ENCODE measurements at regions of chr9 and their contacts with region 1.

Region 1: DNA sequence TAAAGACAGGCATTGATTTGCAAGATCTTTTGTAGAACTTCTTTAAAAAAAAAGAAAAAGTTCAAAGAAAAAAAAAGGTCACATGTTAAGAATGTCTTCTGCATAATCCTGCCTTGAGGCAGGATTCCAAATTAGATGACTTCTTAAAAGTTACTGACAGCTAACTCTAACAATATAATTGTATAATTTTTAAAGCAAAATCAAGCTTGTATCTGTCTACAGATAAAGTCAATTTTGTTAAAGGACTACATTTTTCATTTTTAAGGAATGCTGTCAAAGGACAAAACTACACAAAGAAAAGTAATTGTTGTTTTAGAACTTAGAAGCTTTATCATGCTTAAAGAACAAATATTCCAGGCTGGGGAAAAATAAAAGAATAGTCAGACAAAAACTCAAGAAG is 57.8 kb downstream of the MPDZ start:
- DNase-seq: no peak
- H3K4me3 ChIP-seq: no peak overlapping the region
- H3K4me3 Mint-ChIP-seq: no peak overlapping the region
- H3K27ac ChIP-seq: no peak overlapping the region
- H3K27ac Mint-ChIP-seq: no peak overlapping the region
- H3K4me1 ChIP-seq: no peaks in the 10 kb centered on the region
- H3K4me1 Mint-ChIP-seq: no peaks in the 10 kb centered on the region
- H3K27me3 ChIP-seq: no peaks in the 10 kb centered on the region
- H3K27me3 Mint-ChIP-seq: no peaks in the 10 kb centered on the region

Region 2: DNA sequence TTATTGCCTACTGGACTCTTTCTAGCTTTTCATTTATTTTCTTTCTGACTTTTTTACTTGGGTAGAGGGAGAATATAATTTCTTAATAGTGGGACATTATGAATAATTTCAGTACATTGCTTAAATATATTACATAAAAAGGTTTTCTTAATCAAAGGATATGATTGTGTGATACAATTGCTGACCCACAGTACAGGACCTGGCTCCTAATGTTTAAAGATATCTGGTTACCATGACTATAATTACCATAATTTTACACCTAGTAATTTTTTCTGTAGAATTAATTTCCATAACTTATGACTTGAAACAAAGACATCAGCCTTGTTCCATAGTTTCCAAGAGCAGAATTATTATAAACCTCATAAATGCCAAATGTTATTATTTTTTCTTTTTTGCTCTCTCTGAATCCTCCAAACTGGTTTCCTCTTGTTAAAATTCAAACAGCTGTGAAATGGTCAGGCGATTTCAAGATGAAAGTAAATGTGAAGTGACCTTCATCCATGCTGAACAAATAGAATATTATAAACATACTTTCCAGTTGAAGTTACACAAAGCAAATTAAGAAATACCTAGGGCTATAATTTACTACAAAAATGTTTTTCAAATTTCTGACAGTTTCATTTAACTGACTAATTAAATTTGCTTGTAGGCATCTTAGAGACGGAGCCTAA is 829.8 kb before region 1 on chr9:
- CTCF ChIA-PET with region 1: no interaction called
- POLR2A ChIA-PET with region 1: no interaction called
- intact Hi-C with region 1: loop called (anchors 5 kb)
- DNase-seq: no peak
- H3K4me3 ChIP-seq: no peak overlapping the region
- H3K4me3 Mint-ChIP-seq: no peak overlapping the region
- H3K27ac ChIP-seq: no peak overlapping the region
- H3K27ac Mint-ChIP-seq: no peak overlapping the region
- H3K4me1 ChIP-seq: no peaks in the 10 kb centered on the region
- H3K4me1 Mint-ChIP-seq: no peaks in the 10 kb centered on the region
- H3K27me3 ChIP-seq: no peaks in the 10 kb centered on the region
- H3K27me3 Mint-ChIP-seq: no peaks in the 10 kb centered on the region

Region 3: GRCh38 chr9:13252852-13253251 is 31.1 kb after region 1 on chr9:
- CTCF ChIA-PET with region 1: no interaction called
- POLR2A ChIA-PET with region 1: no interaction called
- intact Hi-C with region 1: no loop called
- DNase-seq: no peak
- H3K4me3 ChIP-seq: no peak overlapping the region
- H3K4me3 Mint-ChIP-seq: no peak overlapping the region
- H3K27ac ChIP-seq: no peak overlapping the region
- H3K27ac Mint-ChIP-seq: no peak overlapping the region
- H3K4me1 ChIP-seq: no peaks in the 10 kb centered on the region
- H3K4me1 Mint-ChIP-seq: no peaks in the 10 kb centered on the region
- H3K27me3 ChIP-seq: no peaks in the 10 kb centered on the region
- H3K27me3 Mint-ChIP-seq: no peaks in the 10 kb centered on the region